ENCODE measurements at regions of chr17 and their contacts with region 1.

Region 1: GRCh38 chr17:77404812-77405581 is 264.2 kb downstream of the SEC14L1 start:
- DNase-seq: no peak
- H3K4me3 ChIP-seq: no peak overlapping the region
- H3K27ac ChIP-seq: peak overlapping the region in 1 of 2 experiments; percentile 55; a peak in 2 of 4 replicates
- H3K4me1 ChIP-seq: peaks cover 27 to 40% of the 10 kb centered on the region in 2 experiments; a peak in 3 of 4 replicates
- H3K27me3 ChIP-seq: no peaks in the 10 kb centered on the region
- CTCF ChIP-seq: no peak
- EP300 ChIP-seq: no peak; a peak in 1 of 4 replicates
- RAD21 ChIP-seq: no peak

Region 2: GRCh38 chr17:77372444-77373298 is 32.3 kb before region 1 on chr17:
- CTCF ChIA-PET with region 1: interaction called, 20 read pairs
- POLR2A ChIA-PET with region 1: interaction called, 9 read pairs
- DNase-seq: peak; percentile 98
- H3K4me3 ChIP-seq: peak overlapping the region; percentile 88 to 95
- H3K27ac ChIP-seq: peak overlapping the region in 1 of 2 experiments; percentile 100; a peak in 2 of 4 replicates
- H3K4me1 ChIP-seq: peaks cover 31 to 64% of the 10 kb centered on the region in 2 experiments
- H3K27me3 ChIP-seq: no peaks in the 10 kb centered on the region
- CTCF ChIP-seq: no peak
- EP300 ChIP-seq: no peak
- RAD21 ChIP-seq: peak; percentile 28

Region 3: DNA sequence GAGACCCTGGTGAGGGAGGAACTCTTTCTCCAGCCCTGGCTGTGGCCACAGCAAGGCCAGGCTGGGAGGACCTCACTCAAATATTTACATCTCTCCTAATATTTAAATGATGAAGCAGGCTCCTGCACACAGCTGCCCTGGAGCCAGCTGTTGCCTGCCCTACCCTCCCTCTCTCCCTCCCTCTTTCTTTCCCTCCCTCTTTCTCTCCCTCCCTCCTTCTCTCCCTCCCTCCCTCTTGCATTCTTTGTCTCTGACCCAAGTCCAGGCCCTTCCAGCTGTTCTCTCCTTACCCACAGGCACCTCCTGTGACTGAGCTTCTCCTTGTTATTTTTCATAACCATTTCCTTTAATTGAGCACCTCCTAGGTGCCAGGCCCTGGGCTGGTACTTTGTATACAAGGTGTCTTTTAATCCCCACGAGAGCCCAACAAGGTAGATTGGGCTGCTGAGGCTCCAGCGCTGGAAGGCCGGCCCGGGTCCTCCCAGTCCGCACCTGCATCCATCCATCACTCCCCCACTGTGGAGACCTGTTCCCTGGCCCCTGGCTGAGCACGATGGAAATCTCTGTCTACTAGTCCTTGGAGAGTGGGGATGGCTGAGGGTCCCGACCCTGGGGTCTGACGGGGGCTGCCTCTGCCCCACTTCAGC is 21.9 kb before region 1 on chr17:
- CTCF ChIA-PET with region 1: interaction called, 82 read pairs
- POLR2A ChIA-PET with region 1: interaction called, 3 read pairs
- DNase-seq: no peak
- H3K4me3 ChIP-seq: no peak overlapping the region
- H3K27ac ChIP-seq: peak overlapping the region in 1 of 2 experiments; percentile 12; a peak in 1 of 4 replicates
- H3K4me1 ChIP-seq: peaks cover 15 to 94% of the 10 kb centered on the region in 2 experiments; a peak in 3 of 4 replicates
- H3K27me3 ChIP-seq: no peaks in the 10 kb centered on the region
- CTCF ChIP-seq: no peak
- EP300 ChIP-seq: no peak
- RAD21 ChIP-seq: no peak

Region 4: GRCh38 chr17:77391668-77392375 is 13.2 kb before region 1 on chr17:
- CTCF ChIA-PET with region 1: interaction called, 82 read pairs
- POLR2A ChIA-PET with region 1: interaction called, 7 read pairs
- DNase-seq: no peak
- H3K4me3 ChIP-seq: no peak overlapping the region
- H3K27ac ChIP-seq: peak overlapping the region; percentile 73 to 83
- H3K4me1 ChIP-seq: peaks cover 60 to 76% of the 10 kb centered on the region in 2 experiments
- H3K27me3 ChIP-seq: no peaks in the 10 kb centered on the region
- CTCF ChIP-seq: no peak
- EP300 ChIP-seq: no peak; a peak in 1 of 4 replicates
- RAD21 ChIP-seq: no peak

Region 5: DNA sequence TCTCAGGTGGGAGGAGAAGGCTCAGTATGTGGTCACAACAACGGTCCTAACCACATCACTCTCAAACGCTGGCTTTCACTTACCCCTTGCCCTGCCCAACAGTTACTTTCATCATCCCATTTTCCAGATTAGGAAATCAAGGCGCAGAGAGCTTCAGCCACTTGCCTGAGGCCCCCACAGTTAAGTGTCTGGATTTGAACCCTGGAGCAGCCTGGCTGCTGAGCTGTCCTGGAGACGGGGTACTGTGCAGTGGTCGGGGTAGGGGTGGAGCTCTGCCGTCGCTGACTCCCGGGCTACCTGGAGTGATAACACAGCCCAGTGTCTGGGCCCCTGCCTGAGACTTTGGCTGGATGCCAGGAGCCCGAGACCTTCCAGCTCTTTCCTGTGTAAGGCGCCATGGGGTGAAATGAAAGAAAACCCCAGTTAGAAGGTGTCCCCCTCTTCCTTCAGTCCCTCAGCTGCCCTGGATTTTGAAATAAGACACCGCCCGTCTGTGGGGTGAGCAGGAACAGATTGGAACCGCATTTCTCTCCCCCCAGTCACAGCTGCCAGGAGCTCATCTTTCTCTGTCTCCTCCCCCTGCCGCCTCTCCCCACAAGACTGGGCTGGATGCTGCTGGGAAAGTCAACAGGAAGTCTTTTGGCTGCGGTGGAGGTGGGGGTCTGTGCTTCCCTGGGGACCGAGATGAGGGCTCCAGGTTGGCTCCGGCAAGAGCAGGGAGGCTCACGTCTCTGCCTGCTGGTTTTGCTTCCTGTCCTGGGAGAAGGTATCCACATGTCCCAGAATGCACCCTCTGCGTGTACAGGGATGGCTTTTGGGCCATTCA is 16.0 kb after region 1 on chr17:
- CTCF ChIA-PET with region 1: interaction called, 364 read pairs
- POLR2A ChIA-PET with region 1: interaction called, 5 read pairs
- DNase-seq: peak; percentile 72
- H3K4me3 ChIP-seq: peak overlapping the region; percentile 2 to 8; a peak in 2 of 4 replicates
- H3K27ac ChIP-seq: peak overlapping the region; percentile 67
- H3K4me1 ChIP-seq: peaks cover 74 to 76% of the 10 kb centered on the region in 2 experiments
- H3K27me3 ChIP-seq: no peaks in the 10 kb centered on the region
- CTCF ChIP-seq: 0 out of 2 replicates have a peak, but pooled peaks have one; percentile 2
- EP300 ChIP-seq: peak; percentile 22 to 58; a peak in 1 of 4 replicates
- RAD21 ChIP-seq: no peak

Region 6: DNA sequence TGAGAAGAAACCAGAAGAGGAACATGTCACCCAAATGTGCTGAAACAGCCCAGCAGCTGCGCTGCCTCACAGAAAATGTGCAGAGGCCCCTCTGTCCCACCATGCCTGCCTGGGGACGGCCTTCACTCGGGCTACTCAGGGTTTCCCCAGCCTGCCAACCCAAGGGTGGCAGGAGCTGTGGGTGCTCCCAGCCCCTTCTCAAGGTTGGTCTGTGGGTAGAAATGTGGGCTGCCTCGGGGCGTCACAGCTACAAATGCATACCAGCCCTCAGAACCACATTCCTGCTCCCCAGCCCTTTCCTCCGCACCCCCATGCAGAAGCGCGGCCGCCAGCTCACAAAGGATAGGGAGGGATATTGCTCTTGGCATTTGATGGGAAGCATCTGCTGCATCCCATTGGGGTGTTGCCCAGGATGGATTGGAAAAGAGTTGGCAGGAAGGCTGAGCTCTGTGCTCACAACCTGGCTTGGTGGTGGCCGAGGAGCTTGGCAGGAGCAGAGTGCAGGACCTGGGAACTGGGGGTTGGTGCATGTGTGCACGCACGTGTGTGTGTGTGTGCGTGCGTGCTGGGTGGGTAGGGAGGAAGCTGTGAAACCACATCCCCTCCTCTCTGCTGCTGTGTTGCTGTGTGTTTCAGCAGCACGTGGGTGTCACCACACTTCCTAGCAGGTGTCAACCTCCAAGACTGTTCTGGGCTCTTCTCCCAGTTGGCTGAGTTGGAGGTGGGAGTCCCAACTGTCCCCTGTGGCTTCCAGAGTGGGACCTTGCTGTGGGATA is 40.2 kb after region 1 on chr17:
- CTCF ChIA-PET with region 1: interaction called, 26 read pairs
- POLR2A ChIA-PET with region 1: interaction called, 4 read pairs
- DNase-seq: no peak
- H3K4me3 ChIP-seq: no peak overlapping the region
- H3K27ac ChIP-seq: peak overlapping the region in 1 of 2 experiments; percentile 5; a peak in 1 of 4 replicates
- H3K4me1 ChIP-seq: peaks cover 20 to 48% of the 10 kb centered on the region in 2 experiments
- H3K27me3 ChIP-seq: no peaks in the 10 kb centered on the region
- CTCF ChIP-seq: no peak
- EP300 ChIP-seq: no peak
- RAD21 ChIP-seq: no peak

Region 7: GRCh38 chr17:77451245-77451893 is 46.4 kb after region 1 on chr17:
- CTCF ChIA-PET with region 1: interaction called, 26 read pairs
- POLR2A ChIA-PET with region 1: interaction called, 4 read pairs
- DNase-seq: peak; percentile 93
- H3K4me3 ChIP-seq: peak overlapping the region; percentile 61 to 79
- H3K27ac ChIP-seq: peak overlapping the region; percentile 89 to 95
- H3K4me1 ChIP-seq: peaks cover 28 to 56% of the 10 kb centered on the region in 2 experiments
- H3K27me3 ChIP-seq: no peaks in the 10 kb centered on the region
- CTCF ChIP-seq: no peak
- EP300 ChIP-seq: no peak
- RAD21 ChIP-seq: no peak